Left cardiac atrium (tissue), 4 donors: ENCODE measurements at regions of chr18 and their contacts with region 1.

Region 1: DNA sequence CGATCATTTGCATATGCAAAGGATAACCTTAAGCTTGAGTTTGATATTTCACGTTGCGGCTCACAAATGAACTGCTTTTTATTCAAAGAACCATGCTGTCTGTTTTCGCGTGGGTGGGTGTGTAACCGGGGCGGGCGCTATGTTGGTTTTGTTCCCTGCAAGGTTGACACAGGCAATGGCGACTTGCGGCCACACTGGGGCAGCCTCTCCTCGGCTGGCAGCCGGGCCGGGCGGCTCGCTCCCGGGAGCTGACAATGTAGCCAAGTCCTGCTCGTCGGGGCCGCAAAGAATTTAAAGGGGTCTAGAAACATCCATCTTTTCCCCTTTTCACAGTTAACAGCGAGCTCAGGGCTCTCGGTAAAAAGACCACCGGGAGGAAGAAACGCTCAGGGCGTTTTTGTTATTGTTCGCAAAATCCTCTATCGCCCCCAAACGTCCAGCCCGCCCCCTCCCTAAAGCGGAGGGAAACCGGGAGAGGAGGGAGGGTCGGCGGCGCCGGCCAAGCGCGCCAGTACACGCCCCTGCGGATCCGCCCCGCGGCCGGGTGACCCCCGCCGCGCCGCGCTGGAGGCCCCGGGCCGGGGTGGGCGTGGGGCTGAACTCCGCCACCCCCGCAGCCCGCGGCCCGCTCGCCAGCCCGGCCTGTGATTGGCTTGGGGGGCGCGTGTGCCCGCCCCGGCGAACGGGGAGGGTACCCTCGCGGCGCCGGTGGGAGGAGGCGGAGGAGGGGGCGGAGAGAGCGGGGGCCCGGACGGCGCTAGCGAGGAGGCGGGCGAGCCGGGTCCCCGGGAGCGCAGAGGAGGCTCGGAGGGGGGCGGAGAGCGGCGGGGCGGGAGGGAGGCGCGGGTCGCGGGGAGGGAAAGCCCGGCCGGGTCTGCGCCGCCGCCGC is at the start of gene NEDD4L:
- DNase-seq: peak; percentile 89
- ATAC-seq: peak; percentile 91 to 92
- total RNA-seq, gene NEDD4L: 64.9 to 98.2 TPM

Region 2: GRCh38 chr18:57621246-57621604 is 422.5 kb before region 1 on chr18:
- intact Hi-C with region 1: no loop called
- DNase-seq: no peak
- ATAC-seq: peak; percentile 34 to 55

Region 3: DNA sequence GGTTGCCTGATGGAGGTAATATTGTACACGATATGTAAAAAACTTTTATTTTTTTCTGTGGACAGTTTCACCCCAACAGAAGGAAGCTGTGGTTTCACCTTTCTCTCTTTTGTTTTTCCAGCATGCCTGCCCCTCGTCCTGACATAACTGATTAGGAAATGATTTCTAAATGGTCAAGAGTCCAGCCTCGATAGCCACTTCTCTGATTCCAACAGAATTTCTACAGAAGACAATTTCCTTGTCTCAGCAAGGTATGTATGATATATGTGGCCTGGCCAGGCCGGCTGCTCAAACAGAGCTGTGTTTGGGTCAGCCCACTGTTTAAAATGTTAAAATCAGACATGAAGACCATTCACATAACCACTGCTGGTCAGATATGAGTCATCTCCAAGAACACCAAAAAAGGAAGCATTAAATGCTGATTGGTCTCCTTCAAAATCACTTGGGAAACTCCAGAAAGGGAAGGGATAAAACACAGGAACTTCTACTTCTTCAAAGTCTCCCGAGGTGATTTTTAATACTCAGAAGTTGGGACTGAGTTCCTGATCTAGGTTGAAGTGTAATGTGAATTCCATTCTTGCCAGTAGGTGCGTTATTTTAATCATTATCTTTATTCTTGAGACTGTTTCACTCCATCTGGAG is 262.9 kb before region 1 on chr18:
- intact Hi-C with region 1: no loop called
- DNase-seq: no peak
- ATAC-seq: peak; percentile 60 to 71

Region 4: GRCh38 chr18:58091099-58091611 is 47.4 kb after region 1 on chr18:
- intact Hi-C with region 1: no loop called
- DNase-seq: no peak
- ATAC-seq: peak in 1 of 2 donors; percentile 83

Region 5: DNA sequence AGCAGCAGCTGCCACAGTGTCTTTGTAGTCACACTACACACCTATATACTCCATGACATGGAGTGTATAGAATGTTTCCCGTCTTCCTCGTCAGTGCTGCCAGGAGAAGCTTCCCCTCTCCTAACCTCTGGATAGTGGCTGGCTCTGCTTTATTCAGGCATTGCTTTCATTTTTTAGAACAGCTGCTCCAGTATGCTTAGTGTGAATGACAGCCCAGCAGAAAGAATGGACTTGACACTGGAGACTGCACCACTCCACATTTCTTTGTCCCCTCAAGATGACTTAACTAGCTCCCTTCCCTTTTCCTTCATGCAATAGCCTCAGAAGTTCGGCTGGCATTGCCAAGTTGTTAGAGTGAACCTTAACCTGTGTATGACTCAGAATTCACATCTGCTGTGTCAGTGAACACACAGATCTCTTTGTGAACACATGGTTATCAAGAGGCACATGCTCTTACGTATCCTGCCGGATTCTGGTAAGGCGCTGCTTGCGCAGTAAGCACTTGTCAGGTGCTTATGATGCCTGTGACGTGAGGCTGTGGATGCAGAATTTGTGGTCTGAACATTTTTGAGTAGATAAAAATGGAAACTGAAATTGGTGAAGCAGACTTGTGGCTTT is 74.2 kb after region 1 on chr18:
- intact Hi-C with region 1: loop called (anchors 2 to 5 kb)
- DNase-seq: peak; percentile 66
- ATAC-seq: peak; percentile 72 to 95

Region 6: DNA sequence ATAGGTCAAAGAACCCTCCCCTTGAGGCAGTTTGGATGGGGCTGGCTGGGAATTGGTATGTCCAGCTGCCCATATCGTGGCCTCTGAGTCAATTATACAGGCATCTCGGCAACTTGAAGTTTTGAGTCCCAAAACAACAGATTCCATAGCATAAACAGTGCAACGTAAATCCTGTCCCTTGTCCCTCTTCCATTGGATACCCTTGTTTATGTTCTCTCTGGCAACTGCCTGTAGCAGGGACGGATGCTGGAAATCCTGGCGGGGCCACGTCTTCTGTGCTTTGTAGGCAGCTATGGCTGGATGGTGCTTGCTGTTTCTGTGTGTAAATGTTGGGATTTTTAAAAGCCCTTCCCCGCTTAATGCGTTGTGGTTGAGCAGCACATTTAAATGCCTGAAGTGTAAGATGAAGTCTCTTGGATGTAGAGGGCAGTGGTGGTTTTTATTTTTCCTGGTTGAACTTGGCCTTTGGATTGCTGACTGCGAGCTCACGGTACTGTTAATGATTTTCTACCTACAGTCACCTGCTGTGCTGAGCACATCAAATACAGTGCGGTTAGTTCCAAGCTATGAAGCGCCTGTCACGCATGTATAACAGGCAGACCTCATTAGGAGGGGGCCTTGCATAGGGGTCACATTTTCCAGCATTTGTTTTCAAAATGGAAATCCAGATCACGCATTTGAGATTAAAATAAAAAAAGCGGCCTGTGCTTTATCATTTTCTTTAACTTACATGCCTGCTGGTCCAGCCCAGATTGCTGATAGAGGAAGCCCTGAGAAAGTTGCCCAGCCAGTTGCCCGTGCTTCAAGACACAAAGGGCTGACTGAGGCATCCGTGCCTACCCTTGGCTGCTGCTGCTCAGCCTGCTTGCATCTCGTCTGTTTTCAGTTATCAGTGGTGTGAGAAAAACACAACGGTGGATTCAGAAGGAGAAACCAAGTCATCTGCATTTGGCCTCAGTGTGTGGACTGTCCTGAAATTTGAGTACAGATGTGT is 84.9 kb after region 1 on chr18:
- intact Hi-C with region 1: loop called (anchors 2 to 5 kb)
- DNase-seq: no peak
- ATAC-seq: no peak

Region 7: DNA sequence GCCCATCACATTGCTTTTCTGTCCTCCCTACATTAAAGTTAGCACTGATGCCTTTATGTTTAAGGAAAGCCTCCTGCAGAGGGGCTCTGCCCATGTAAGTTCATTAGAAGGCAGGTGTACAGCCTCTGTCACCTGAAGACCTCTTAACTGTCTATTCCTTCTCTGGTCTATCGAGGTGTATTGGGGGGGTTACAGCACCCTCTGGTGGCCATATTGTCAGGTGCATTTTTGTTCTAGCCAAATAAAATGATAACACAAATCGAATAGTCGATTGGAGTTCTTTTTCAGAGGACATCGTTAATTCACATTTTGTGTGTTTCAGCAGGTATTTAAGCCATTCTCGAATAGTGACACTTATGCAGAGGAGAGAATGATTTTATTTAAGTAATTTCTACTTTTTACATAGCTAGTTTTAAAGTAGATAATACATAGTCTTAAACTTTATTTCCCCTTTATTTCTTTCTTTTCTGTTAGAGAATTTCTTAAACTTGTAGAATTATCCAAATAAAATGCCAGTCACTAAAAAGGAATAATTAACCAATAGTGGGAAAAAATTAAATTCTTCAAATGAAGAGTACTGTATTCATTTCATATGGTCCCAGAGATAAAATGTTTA is 137.1 kb after region 1 on chr18:
- intact Hi-C with region 1: loop called in 1 of 2 experiments (anchors 5 kb)
- DNase-seq: no peak
- ATAC-seq: peak in 1 of 2 donors; percentile 29

Region 8: DNA sequence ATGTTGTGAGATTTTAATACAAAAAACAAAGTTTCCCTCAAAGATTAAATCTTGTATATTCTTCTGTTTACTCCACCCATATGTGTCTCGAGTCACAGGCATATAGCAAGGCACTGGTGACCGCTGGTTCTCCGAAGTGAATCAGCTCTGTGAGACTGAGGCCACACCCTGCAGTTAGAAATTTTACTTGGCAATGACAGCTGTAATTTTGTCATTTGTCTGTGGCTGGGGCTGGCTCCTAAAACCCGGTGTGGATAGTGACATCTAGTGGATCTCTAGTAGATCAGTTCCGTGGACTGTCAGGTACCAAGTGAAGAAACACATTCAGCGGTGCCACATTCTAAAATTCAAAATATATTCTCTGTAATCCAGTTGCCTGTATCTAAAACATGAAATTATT is 278.3 kb after region 1 on chr18:
- intact Hi-C with region 1: loop called in 1 of 2 experiments (anchors 10 kb)
- DNase-seq: peak; percentile 71
- ATAC-seq: peak; percentile 94 to 96

Region 9: GRCh38 chr18:58493516-58494253 is 449.9 kb after region 1 on chr18:
- intact Hi-C with region 1: loop called in 1 of 2 experiments (anchors 5 kb)
- DNase-seq: peak; percentile 66
- ATAC-seq: peak; percentile 90 to 91